H1 (cell line): ENCODE measurements at regions of chr12 and their contacts with region 1.

Region 1: DNA sequence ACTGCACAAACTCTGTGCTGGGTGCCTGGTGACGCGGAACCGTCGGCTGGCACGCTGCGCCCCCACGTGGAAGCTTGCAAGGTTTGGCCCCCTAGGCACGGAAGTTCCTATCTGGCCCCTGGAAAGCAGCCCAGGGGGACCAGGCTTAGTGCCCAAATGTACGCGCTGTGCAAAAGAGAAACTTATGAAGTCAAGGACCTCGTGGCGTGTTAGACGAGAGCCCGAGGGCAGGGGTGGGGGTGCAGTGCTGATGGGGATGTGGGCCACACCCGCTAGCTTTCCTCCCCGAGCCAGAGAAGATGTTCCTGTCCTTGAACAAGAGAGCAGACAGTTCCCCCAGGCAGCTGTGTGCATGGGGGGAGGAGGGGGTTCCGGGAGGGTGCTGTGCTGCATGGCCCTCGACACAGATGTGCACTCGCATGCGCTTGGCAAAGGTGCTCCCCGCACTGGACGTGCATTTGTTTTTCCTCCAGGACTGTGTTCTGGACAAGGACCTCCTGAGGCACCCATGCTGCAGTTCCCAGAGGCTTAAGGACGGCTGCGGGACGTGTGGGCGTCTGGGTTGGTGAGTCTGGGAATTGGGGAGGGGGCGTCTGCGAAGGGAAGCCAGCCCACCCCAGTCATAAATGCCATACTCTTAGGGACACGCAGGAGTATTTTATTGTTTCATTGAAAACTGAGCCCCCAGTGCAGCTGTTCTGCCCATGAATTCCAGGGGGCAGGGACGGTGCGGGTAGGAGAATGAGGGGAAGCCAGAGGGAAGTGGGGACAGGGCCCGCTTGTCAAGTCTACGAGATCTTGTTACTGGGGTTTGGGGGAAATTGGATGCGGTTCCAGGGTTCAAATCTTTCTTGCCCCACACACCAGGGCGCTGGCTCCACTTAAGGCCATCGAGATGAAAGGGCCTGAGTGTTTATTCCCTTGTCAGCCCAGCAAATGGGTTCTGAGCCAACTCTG is 80.0 kb downstream of the NTF3 start:
- DNase-seq: peak in 1 of 2 experiments; percentile 77
- H3K4me3 ChIP-seq: no peak overlapping the region
- H3K27ac ChIP-seq: no peak overlapping the region
- H3K4me1 ChIP-seq: peaks cover 0 to 7% (median 3%) of the 10 kb centered on the region in 4 experiments; a peak in 4 of 7 replicates
- H3K27me3 ChIP-seq: no peaks in the 10 kb centered on the region
- CTCF ChIP-seq: peak; percentile 73 to 82 (median 76)
- EP300 ChIP-seq: no peak
- POLR2A ChIP-seq: no peak
- RAD21 ChIP-seq: peak; percentile 66 to 83

Region 2: DNA sequence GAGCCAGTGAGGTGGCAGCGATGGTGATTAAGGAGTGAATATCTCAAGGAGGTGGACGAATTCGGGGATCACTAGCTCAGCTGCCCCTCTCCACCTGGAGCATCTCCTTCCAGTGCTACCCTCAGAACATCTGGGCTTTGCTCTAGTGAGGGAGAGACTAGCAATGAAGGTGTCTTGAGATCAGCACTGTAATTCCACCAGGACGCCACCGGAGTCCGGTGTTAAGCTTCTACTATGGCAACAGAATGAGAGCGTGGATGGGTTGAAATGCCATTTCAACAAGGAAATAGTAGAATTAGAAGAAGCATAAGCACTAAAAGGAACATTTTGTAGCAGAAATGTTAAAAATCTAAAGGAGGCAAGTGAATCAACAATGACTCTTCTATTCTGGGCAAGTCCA is 18.9 kb before region 1 on chr12:
- CTCF ChIA-PET with region 1: interaction called, 18 read pairs
- POLR2A ChIA-PET with region 1: no interaction called
- DNase-seq: no peak
- H3K4me3 ChIP-seq: no peak overlapping the region
- H3K27ac ChIP-seq: no peak overlapping the region
- H3K4me1 ChIP-seq: no peaks in the 10 kb centered on the region; a peak in 1 of 7 replicates
- H3K27me3 ChIP-seq: no peaks in the 10 kb centered on the region
- CTCF ChIP-seq: peak in 2 of 3 experiments; percentile 22 to 48; a peak in 2 of 4 replicates
- EP300 ChIP-seq: no peak
- POLR2A ChIP-seq: no peak
- RAD21 ChIP-seq: peak; percentile 45 to 57

Region 3: GRCh38 chr12:5499566-5500330 is 12.2 kb before region 1 on chr12:
- CTCF ChIA-PET with region 1: interaction called, 25 read pairs
- POLR2A ChIA-PET with region 1: no interaction called
- DNase-seq: no peak
- H3K4me3 ChIP-seq: no peak overlapping the region
- H3K27ac ChIP-seq: no peak overlapping the region
- H3K4me1 ChIP-seq: no peaks in the 10 kb centered on the region; a peak in 2 of 7 replicates
- H3K27me3 ChIP-seq: no peaks in the 10 kb centered on the region
- CTCF ChIP-seq: no peak
- EP300 ChIP-seq: no peak
- POLR2A ChIP-seq: no peak
- RAD21 ChIP-seq: no peak

Region 4: DNA sequence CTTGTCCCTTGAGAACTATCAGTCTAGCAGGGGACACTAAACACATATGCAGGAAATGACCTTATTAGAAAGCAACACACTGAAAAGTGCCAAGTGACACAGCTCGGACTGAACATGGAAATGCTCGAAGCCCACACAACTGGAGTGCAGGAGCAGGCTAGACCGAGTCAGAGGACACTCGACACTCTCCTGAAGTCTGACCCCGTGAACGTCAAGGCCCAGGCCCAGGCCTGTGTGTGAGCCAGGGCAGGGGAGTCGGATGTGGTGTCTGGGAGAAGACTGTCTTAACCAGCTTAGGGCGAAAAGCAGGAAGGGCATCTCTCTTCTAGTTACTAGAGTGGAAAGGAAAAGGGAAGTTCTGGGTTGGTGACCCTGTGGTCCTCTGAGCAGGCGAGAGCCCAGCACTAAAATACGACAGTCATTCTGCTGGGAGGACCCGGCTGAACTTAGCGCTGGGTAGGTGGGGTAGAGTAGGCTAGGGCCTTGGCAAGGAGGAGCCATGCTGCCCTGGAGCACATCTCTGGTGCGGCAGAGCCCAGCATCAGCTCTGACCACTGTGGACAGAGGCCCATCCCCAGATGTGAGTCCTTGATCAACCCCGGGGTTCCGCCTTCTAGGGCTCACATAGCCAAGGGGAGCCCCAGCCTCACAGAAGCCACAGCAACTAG is 13.0 kb after region 1 on chr12:
- CTCF ChIA-PET with region 1: interaction called, 11 read pairs
- POLR2A ChIA-PET with region 1: no interaction called
- DNase-seq: peak in 1 of 2 experiments; percentile 39
- H3K4me3 ChIP-seq: no peak overlapping the region
- H3K27ac ChIP-seq: no peak overlapping the region
- H3K4me1 ChIP-seq: no peaks in the 10 kb centered on the region
- H3K27me3 ChIP-seq: no peaks in the 10 kb centered on the region
- CTCF ChIP-seq: no peak
- EP300 ChIP-seq: no peak
- POLR2A ChIP-seq: no peak
- RAD21 ChIP-seq: no peak